ENCODE measurements at regions of chr12 and their contacts with region 1.

Region 1: DNA sequence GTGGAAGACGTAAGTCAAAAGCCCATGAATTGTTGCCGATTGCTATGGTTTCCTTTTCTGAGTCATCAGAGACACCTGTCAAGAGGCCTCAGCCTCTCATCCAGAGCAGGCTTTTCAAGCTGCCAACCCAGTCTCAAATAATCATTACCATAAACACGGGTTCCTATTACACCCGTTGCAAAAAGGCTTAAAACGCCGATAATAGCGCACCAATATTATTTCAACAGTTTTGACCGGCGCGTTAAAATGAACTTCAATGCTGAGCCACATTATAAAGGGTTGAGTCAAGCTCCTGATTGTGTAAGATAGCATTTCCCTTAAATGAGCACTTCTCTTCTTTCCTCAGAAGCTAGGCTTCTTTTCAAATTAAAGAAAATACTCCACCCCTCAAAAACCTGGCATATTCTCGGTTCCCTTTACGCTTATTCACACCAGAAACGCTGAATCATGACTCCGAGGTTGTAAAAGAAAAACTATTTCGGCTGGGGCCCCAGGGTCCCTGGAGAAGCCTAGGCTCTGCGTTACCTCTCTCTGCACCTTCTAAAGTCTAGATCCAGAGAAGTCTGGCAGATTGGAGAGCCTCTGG is 1.4 kb downstream of the TMTC1 start:
- DNase-seq: no peak
- H3K4me3 ChIP-seq: peak overlapping the region; percentile 57
- H3K27ac ChIP-seq: peak overlapping the region; percentile 62 to 87
- H3K4me1 ChIP-seq: peaks cover 3% of the 10 kb centered on the region
- H3K27me3 ChIP-seq: no peaks in the 10 kb centered on the region
- CTCF ChIP-seq: no peak
- EP300 ChIP-seq: no peak
- POLR2A ChIP-seq: no peak

Region 2: GRCh38 chr12:29519585-29520182 is 262.7 kb before region 1 on chr12:
- intact Hi-C with region 1: loop called in 1 of 4 experiments (anchors 10 kb)
- DNase-seq: peak in 2 of 5 donors; percentile 33 to 40
- H3K4me3 ChIP-seq: no peak overlapping the region
- H3K27ac ChIP-seq: no peak overlapping the region
- H3K4me1 ChIP-seq: no peaks in the 10 kb centered on the region
- H3K27me3 ChIP-seq: no peaks in the 10 kb centered on the region
- CTCF ChIP-seq: peak; percentile 18 to 59 (median 52)
- EP300 ChIP-seq: no peak
- POLR2A ChIP-seq: no peak

Region 3: GRCh38 chr12:29545102-29545467 is 237.3 kb before region 1 on chr12:
- intact Hi-C with region 1: loop called in 2 of 4 experiments (anchors 10 kb)
- DNase-seq: no peak
- H3K4me3 ChIP-seq: no peak overlapping the region
- H3K27ac ChIP-seq: no peak overlapping the region
- H3K4me1 ChIP-seq: peaks cover 5% of the 10 kb centered on the region
- H3K27me3 ChIP-seq: no peaks in the 10 kb centered on the region
- CTCF ChIP-seq: no peak
- EP300 ChIP-seq: no peak
- POLR2A ChIP-seq: no peak

Region 4: DNA sequence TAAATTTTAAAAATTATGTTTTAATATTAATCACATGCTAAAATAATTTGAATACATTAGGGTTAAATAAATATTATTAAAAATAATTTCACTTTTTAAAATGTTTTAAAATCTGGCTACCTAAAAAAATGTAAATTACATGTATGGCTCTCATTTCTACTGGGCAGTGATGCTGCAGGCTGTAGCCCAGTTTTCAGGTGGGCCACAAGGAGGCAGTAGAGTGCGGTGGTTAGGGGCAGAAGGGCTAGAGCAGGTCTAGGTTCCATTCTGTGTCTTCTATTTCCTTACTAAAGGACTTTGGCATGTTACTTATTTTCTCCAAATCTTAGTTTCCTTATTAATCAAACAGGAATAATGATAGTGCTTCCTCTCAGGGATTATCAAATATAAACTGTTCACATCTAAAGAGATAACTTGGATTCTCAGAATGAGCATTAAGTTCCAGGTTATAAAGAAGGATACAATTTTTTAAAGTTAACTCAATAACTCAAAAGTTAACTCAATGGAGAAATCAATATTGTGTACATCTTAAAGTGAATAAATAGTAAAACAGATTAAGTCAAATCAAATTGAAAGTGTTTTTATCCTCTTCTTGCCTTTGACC is 230.0 kb before region 1 on chr12:
- intact Hi-C with region 1: loop called in 2 of 4 experiments (anchors 10 kb)
- DNase-seq: peak; percentile 50 to 76 (median 65)
- H3K4me3 ChIP-seq: no peak overlapping the region
- H3K27ac ChIP-seq: peak overlapping the region in 1 of 2 donors; percentile 10
- H3K4me1 ChIP-seq: peaks cover 1% of the 10 kb centered on the region
- H3K27me3 ChIP-seq: no peaks in the 10 kb centered on the region
- CTCF ChIP-seq: peak in 2 of 3 donors; percentile 38 to 50
- EP300 ChIP-seq: no peak
- POLR2A ChIP-seq: no peak